ENCODE measurements at regions of chr13 and their contacts with region 1.

Region 1: GRCh38 chr13:79775830-79776229 is 294.9 kb downstream of the NDFIP2 start:
- DNase-seq: peak; percentile 58
- H3K4me3 Mint-ChIP-seq: no peak overlapping the region
- H3K27ac Mint-ChIP-seq: no peak overlapping the region
- H3K4me1 Mint-ChIP-seq: peaks cover 20% of the 10 kb centered on the region
- H3K27me3 Mint-ChIP-seq: no peaks in the 10 kb centered on the region
- CTCF ChIP-seq: peak; percentile 53

Region 2: DNA sequence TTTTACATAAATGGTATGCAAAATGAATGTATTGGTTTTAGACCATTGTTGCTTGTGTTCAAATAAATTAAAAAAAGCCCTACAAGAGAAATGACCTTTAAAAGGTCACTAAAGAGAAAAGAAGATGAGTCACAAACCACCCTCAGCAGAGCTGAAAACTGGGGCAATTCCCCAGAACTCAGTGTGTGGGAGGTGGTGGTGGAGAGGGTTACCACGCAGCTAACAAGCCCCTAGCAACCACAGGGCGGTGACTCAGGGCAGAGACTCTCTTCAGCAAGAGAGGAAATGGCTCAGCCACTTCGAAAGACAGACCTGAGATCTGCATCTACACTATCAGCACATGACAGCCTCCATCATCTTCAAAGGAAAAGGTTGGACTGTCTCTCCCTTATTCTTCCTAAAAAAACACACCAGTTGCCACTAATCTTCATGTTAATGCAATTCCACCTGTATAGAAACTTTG is 324.3 kb before region 1 on chr13:
- CTCF ChIA-PET with region 1: no interaction called
- POLR2A ChIA-PET with region 1: no interaction called
- intact Hi-C with region 1: no loop called
- DNase-seq: peak; percentile 79
- H3K4me3 Mint-ChIP-seq: no peak overlapping the region
- H3K27ac Mint-ChIP-seq: no peak overlapping the region
- H3K4me1 Mint-ChIP-seq: peaks cover 9% of the 10 kb centered on the region
- H3K27me3 Mint-ChIP-seq: no peaks in the 10 kb centered on the region
- CTCF ChIP-seq: no peak

Region 3: GRCh38 chr13:79631051-79631659 is 144.7 kb before region 1 on chr13:
- CTCF ChIA-PET with region 1: interaction called, 8 read pairs
- POLR2A ChIA-PET with region 1: no interaction called
- intact Hi-C with region 1: loop called (anchors 1 kb)
- DNase-seq: peak; percentile 98
- H3K4me3 Mint-ChIP-seq: no peak overlapping the region
- H3K27ac Mint-ChIP-seq: peak overlapping the region; percentile 23
- H3K4me1 Mint-ChIP-seq: peaks cover 19% of the 10 kb centered on the region
- H3K27me3 Mint-ChIP-seq: no peaks in the 10 kb centered on the region
- CTCF ChIP-seq: peak; percentile 47

Region 4: DNA sequence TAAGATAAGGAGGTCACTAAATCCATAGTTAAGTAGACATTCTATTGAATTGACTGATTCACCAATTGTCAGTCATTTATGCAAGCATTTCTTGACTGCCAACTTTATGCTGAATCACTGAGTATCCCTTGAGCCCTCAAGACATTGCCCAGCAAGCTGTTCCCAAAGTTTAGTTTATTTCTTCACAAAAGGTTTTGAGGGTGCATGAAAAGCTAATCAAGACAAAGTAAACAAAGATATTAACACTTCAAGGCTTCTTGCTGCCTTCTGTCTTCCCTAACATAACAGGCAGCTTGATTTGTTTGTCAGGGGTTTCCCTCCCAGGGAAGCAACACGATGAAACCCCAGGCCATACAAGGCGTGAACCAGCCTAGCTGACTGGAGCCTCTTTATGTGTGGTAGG is 190.7 kb after region 1 on chr13:
- CTCF ChIA-PET with region 1: no interaction called
- POLR2A ChIA-PET with region 1: no interaction called
- intact Hi-C with region 1: no loop called
- DNase-seq: peak; percentile 38
- H3K4me3 Mint-ChIP-seq: no peak overlapping the region
- H3K27ac Mint-ChIP-seq: no peak overlapping the region
- H3K4me1 Mint-ChIP-seq: peaks cover 8% of the 10 kb centered on the region
- H3K27me3 Mint-ChIP-seq: no peaks in the 10 kb centered on the region
- CTCF ChIP-seq: no peak

Region 5: GRCh38 chr13:80030491-80030890 is 254.7 kb after region 1 on chr13:
- CTCF ChIA-PET with region 1: no interaction called
- POLR2A ChIA-PET with region 1: no interaction called
- intact Hi-C with region 1: loop called (anchors 5 kb)
- DNase-seq: peak; percentile 84
- H3K4me3 Mint-ChIP-seq: no peak overlapping the region
- H3K27ac Mint-ChIP-seq: no peak overlapping the region
- H3K4me1 Mint-ChIP-seq: peaks cover 5% of the 10 kb centered on the region
- H3K27me3 Mint-ChIP-seq: no peaks in the 10 kb centered on the region
- CTCF ChIP-seq: peak; percentile 63

Region 6: GRCh38 chr13:80363890-80364503 is 588.2 kb after region 1 on chr13:
- CTCF ChIA-PET with region 1: interaction called, 5 read pairs
- POLR2A ChIA-PET with region 1: no interaction called
- intact Hi-C with region 1: loop called (anchors 2 kb)
- DNase-seq: peak; percentile 45
- H3K4me3 Mint-ChIP-seq: no peak overlapping the region
- H3K27ac Mint-ChIP-seq: no peak overlapping the region
- H3K4me1 Mint-ChIP-seq: peaks cover 14% of the 10 kb centered on the region
- H3K27me3 Mint-ChIP-seq: no peaks in the 10 kb centered on the region
- CTCF ChIP-seq: peak; percentile 64

Measured in MCF 10A (cell line).